B cell (primary cell): ENCODE measurements at regions of chr2 and their contacts with region 1.

Region 1: GRCh38 chr2:27303093-27304025 is 4.9 kb downstream of the UCN start:
- DNase-seq: peak; percentile 70
- ATAC-seq: peak; percentile 74
- H3K4me3 ChIP-seq: peak overlapping the region in 4 of 5 experiments; percentile 7 to 38 (median 26)
- H3K4me3 Mint-ChIP-seq: peak overlapping the region; percentile 74
- H3K27ac ChIP-seq: peak overlapping the region in 1 of 2 donors; percentile 26
- H3K27ac Mint-ChIP-seq: peak overlapping the region; percentile 71
- H3K4me1 ChIP-seq: peaks cover 14 to 22% of the 10 kb centered on the region in 2 donors
- H3K4me1 Mint-ChIP-seq: peaks cover 11% of the 10 kb centered on the region
- H3K27me3 ChIP-seq: peaks cover 0 to 36% (median 10%) of the 10 kb centered on the region in 4 experiments
- H3K27me3 Mint-ChIP-seq: peaks cover 26% of the 10 kb centered on the region
- CTCF ChIP-seq: peak; percentile 96

Region 2: GRCh38 chr2:27095745-27096651 is 207.4 kb before region 1 on chr2:
- CTCF ChIA-PET with region 1: interaction called, 26 read pairs
- POLR2A ChIA-PET with region 1: no interaction called
- intact Hi-C with region 1: loop called (anchors 1 kb)
- DNase-seq: peak; percentile 67
- ATAC-seq: peak; percentile 90
- H3K4me3 ChIP-seq: peak overlapping the region in 3 of 5 experiments; percentile 38 to 55 (median 48)
- H3K4me3 Mint-ChIP-seq: peak overlapping the region; percentile 81
- H3K27ac ChIP-seq: no peak overlapping the region
- H3K27ac Mint-ChIP-seq: peak overlapping the region; percentile 41
- H3K4me1 ChIP-seq: peaks cover 6 to 9% of the 10 kb centered on the region in 2 donors
- H3K4me1 Mint-ChIP-seq: peaks cover 11% of the 10 kb centered on the region
- H3K27me3 ChIP-seq: no peaks in the 10 kb centered on the region
- H3K27me3 Mint-ChIP-seq: no peaks in the 10 kb centered on the region
- CTCF ChIP-seq: no peak

Region 3: GRCh38 chr2:27123302-27124231 is 179.8 kb before region 1 on chr2 and contains the start of gene ABHD1:
- CTCF ChIA-PET with region 1: no interaction called
- POLR2A ChIA-PET with region 1: no interaction called
- intact Hi-C with region 1: no loop called
- DNase-seq: peak; percentile 71
- ATAC-seq: peak; percentile 87
- H3K4me3 ChIP-seq: peak within 1 kb of the TSS; percentile 58 to 74 (median 68)
- H3K4me3 Mint-ChIP-seq: peak within 1 kb of the TSS; percentile 93
- H3K27ac ChIP-seq: no peak within 1 kb of the TSS
- H3K27ac Mint-ChIP-seq: peak within 1 kb of the TSS; percentile 87
- H3K4me1 ChIP-seq: peaks cover 17% of the 10 kb centered on the region in 2 donors
- H3K4me1 Mint-ChIP-seq: peaks cover 18% of the 10 kb centered on the region
- H3K27me3 ChIP-seq: peaks cover 0 to 16% (median 6%) of the 10 kb centered on the region in 4 experiments
- H3K27me3 Mint-ChIP-seq: peaks cover 32% of the 10 kb centered on the region
- CTCF ChIP-seq: no peak
- total RNA-seq, gene ABHD1: 0.73 and 1.5 TPM in 2 replicates

Region 4: GRCh38 chr2:27249891-27250651 is 53.3 kb before region 1 on chr2:
- CTCF ChIA-PET with region 1: interaction called, 6 read pairs
- POLR2A ChIA-PET with region 1: no interaction called
- intact Hi-C with region 1: loop called (anchors 1 kb)
- DNase-seq: peak; percentile 57
- ATAC-seq: peak; percentile 45
- H3K4me3 ChIP-seq: no peak overlapping the region
- H3K4me3 Mint-ChIP-seq: no peak overlapping the region
- H3K27ac ChIP-seq: no peak overlapping the region
- H3K27ac Mint-ChIP-seq: no peak overlapping the region
- H3K4me1 ChIP-seq: peaks cover 0 to 5% of the 10 kb centered on the region in 2 donors
- H3K4me1 Mint-ChIP-seq: no peaks in the 10 kb centered on the region
- H3K27me3 ChIP-seq: peaks cover 0 to 29% (median 9%) of the 10 kb centered on the region in 4 experiments
- H3K27me3 Mint-ChIP-seq: peaks cover 38% of the 10 kb centered on the region
- CTCF ChIP-seq: peak; percentile 51

Region 5: DNA sequence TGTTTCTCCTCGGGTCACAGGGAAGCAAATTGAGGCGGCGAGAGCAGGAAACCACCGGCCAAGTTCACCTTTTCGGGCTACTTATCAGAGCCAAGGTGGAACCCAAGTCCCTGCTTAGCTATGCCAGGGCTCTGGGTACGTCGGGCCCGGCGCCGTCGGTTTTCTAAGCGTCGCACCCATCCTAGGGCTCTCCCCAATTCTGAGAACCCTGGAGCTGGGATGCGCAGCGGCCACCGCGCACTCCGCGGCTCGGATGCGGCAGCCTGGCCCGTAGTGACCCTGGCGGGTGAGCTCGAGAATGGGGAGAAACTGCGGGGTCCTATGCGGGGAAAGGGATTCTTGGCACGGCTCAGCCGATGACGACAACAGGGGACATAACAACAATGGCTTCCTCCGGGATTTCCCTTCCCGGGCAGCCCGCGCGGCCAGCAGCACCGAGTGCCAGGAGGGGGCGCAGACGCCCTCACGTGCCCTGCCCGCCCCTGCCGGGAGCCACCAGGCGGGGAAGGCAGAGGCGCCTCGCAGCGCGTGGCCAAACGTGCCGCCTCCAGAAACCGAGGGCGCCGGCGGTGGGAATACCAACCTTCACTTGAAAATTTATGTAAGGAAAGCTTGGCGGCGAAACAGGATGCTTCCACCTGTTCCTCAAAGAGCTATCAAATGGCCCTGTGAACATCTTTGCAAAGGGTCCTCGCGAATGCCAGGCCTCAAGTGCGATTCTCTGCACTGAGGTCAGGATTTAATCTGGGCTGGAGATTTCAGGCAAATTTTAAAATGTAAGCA is 38.4 kb before region 1 on chr2:
- CTCF ChIA-PET with region 1: interaction called, 23 read pairs
- POLR2A ChIA-PET with region 1: no interaction called
- intact Hi-C with region 1: loop called (anchors 5 kb)
- DNase-seq: peak; percentile 88
- ATAC-seq: peak; percentile 69
- H3K4me3 ChIP-seq: peak overlapping the region; percentile 23 to 68 (median 64)
- H3K4me3 Mint-ChIP-seq: peak overlapping the region; percentile 94
- H3K27ac ChIP-seq: peak overlapping the region in 1 of 2 donors; percentile 59
- H3K27ac Mint-ChIP-seq: no peak overlapping the region
- H3K4me1 ChIP-seq: peaks cover 35 to 38% of the 10 kb centered on the region in 2 donors
- H3K4me1 Mint-ChIP-seq: peaks cover 35% of the 10 kb centered on the region
- H3K27me3 ChIP-seq: peaks cover 0 to 69% (median 32%) of the 10 kb centered on the region in 4 experiments
- H3K27me3 Mint-ChIP-seq: peaks cover 47% of the 10 kb centered on the region
- CTCF ChIP-seq: peak; percentile 68

Region 6: GRCh38 chr2:27291865-27292264 is 11.5 kb before region 1 on chr2:
- CTCF ChIA-PET with region 1: interaction called, 21 read pairs
- POLR2A ChIA-PET with region 1: no interaction called
- intact Hi-C with region 1: no loop called
- DNase-seq: no peak
- ATAC-seq: no peak
- H3K4me3 ChIP-seq: no peak overlapping the region
- H3K4me3 Mint-ChIP-seq: no peak overlapping the region
- H3K27ac ChIP-seq: no peak overlapping the region
- H3K27ac Mint-ChIP-seq: no peak overlapping the region
- H3K4me1 ChIP-seq: peaks cover 5 to 10% of the 10 kb centered on the region in 2 donors
- H3K4me1 Mint-ChIP-seq: peaks cover 2% of the 10 kb centered on the region
- H3K27me3 ChIP-seq: peaks cover 0 to 6% (median 0%) of the 10 kb centered on the region in 4 experiments
- H3K27me3 Mint-ChIP-seq: peaks cover 20% of the 10 kb centered on the region
- CTCF ChIP-seq: no peak